Dorsolateral prefrontal cortex (tissue), 120 donors: ENCODE measurements at regions of chrX and their contacts with region 1.

Region 1: GRCh38 chrX:129678614-129679195 is 23.9 kb upstream of the APLN start:
- DNase-seq: peak in 1 of 10 donors; percentile 11
- H3K4me3 ChIP-seq: peak overlapping the region; percentile 16 to 68 (median 49)
- H3K27ac ChIP-seq: peak overlapping the region in 51 of 59 donors; percentile 20 to 91 (median 83)
- H3K27me3 ChIP-seq: peaks cover 0 to 54% (median 11%) of the 10 kb centered on the region in 45 donors
- CTCF ChIP-seq: peak in 3 of 56 donors; percentile 2 to 34 (median 4)

Region 2: GRCh38 chrX:129585702-129586101 is 93.0 kb before region 1 on chrX:
- intact Hi-C with region 1: no loop called
- DNase-seq: no peak
- H3K4me3 ChIP-seq: no peak overlapping the region
- H3K27ac ChIP-seq: no peak overlapping the region
- H3K27me3 ChIP-seq: peaks cover 0 to 52% (median 6%) of the 10 kb centered on the region in 45 donors
- CTCF ChIP-seq: no peak

Region 3: GRCh38 chrX:129701624-129702069 is 22.9 kb after region 1 on chrX:
- intact Hi-C with region 1: loop called in 1 of 2 experiments (anchors 2 kb)
- DNase-seq: peak in 3 of 10 donors; percentile 7 to 28 (median 27)
- H3K4me3 ChIP-seq: no peak overlapping the region
- H3K27ac ChIP-seq: peak overlapping the region in 23 of 59 donors; percentile 3 to 67 (median 32)
- H3K27me3 ChIP-seq: peaks cover 0 to 74% (median 7%) of the 10 kb centered on the region in 45 donors
- CTCF ChIP-seq: no peak